GM12878 (cell line): ENCODE measurements at regions of chr12 and their contacts with region 1.

Region 1: DNA sequence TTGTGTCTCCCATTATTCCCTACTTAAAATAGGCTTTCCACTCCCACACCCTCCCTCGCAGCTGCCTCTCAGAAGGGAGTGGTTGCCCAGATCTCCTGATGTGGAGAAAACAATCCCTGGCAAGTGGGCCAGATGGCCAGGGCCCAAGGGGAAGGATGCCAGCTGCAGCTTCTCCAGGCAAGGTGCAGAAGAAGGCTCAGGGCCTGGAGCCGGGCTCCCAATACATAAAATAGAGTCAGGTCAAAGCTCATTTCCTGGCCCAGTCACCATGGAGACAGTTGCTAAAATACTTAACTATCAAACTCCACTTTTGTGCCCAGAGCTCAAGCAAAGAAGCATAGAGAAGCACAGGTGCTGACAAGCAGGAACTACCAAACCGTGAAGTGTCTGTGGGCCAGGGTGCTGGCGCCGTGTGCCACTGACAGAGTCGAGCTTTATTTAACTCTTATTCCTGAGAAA is 45.7 kb upstream of the ITPR2 start:
- DNase-seq: no peak
- ATAC-seq: peak; percentile 77
- H3K4me3 ChIP-seq: no peak overlapping the region
- H3K27ac ChIP-seq: no peak overlapping the region
- H3K4me1 ChIP-seq: peaks cover 15% of the 10 kb centered on the region
- H3K27me3 ChIP-seq: no peaks in the 10 kb centered on the region
- CTCF ChIP-seq: no peak
- EP300 ChIP-seq: no peak; a peak in 1 of 4 replicates
- POLR2A ChIP-seq: no peak
- RAD21 ChIP-seq: no peak

Region 2: GRCh38 chr12:26845057-26845666 is 33.5 kb before region 1 on chr12:
- CTCF ChIA-PET with region 1: interaction called, 158 read pairs
- POLR2A ChIA-PET with region 1: interaction called, 4 read pairs
- RAD21 ChIA-PET with region 1: interaction called, 60 read pairs
- SMC1A ChIA-PET with region 1: interaction called, 27 read pairs
- in situ Hi-C with region 1: no loop called
- intact Hi-C with region 1: no loop called
- DNase-seq: no peak
- ATAC-seq: peak; percentile 43; the same call in 2 of the 3 replicates
- H3K4me3 ChIP-seq: no peak overlapping the region
- H3K27ac ChIP-seq: no peak overlapping the region
- H3K4me1 ChIP-seq: peaks cover 10% of the 10 kb centered on the region
- H3K27me3 ChIP-seq: no peaks in the 10 kb centered on the region
- CTCF ChIP-seq: peak; percentile 38 to 59 (median 56)
- EP300 ChIP-seq: no peak
- POLR2A ChIP-seq: no peak
- RAD21 ChIP-seq: peak; percentile 58

Region 3: GRCh38 chr12:26863502-26863901 is 15.2 kb before region 1 on chr12:
- CTCF ChIA-PET with region 1: interaction called, 115 read pairs
- POLR2A ChIA-PET with region 1: interaction called, 13 read pairs
- RAD21 ChIA-PET with region 1: interaction called, 36 read pairs
- SMC1A ChIA-PET with region 1: interaction called, 105 read pairs
- in situ Hi-C with region 1: no loop called
- intact Hi-C with region 1: no loop called
- DNase-seq: no peak
- ATAC-seq: 0 out of 3 replicates have a peak, but pooled peaks have one; percentile 17
- H3K4me3 ChIP-seq: no peak overlapping the region
- H3K27ac ChIP-seq: no peak overlapping the region
- H3K4me1 ChIP-seq: peaks cover 5% of the 10 kb centered on the region; the same call in 1 of the 2 replicates
- H3K27me3 ChIP-seq: no peaks in the 10 kb centered on the region
- CTCF ChIP-seq: 0 out of 6 replicates have a peak, but pooled peaks of 1 of the 3 experiments have one; percentile 24
- EP300 ChIP-seq: no peak
- POLR2A ChIP-seq: no peak
- RAD21 ChIP-seq: no peak